SK-N-SH (cell line): ENCODE measurements at regions of chr2 and their contacts with region 1.

Region 1: DNA sequence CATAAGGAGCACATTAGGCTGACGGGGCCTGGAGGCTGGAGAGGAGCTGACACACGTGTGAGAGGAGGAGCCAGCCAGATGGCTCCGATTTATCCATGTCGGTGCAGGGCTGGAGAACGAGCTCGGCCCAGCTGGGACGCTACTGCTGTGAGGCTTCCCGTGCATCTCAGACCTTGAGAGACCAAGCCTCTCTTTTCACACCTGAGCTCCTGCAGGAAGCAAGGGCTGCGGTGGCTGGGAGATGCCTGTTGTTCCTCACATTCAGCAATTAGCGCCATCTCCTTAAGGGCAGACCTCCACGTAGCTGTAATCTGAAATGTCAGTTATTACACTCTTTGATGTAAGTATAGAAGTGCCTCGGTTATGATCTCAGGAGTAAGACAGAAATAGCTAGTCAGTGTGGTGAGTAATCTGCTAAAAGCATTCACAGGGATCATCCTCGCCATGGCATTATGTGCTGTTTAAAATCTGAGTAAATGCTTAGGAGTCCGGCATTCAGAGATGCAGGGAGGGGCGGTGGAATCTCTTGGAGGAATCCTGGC is 107.9 kb downstream of the PRKCE start:
- DNase-seq: peak; percentile 79
- H3K4me3 ChIP-seq: peak overlapping the region; percentile 29; a peak in 3 of 4 replicates
- H3K27ac ChIP-seq: peak overlapping the region in 1 of 2 experiments; percentile 69
- H3K4me1 ChIP-seq: peaks cover 17 to 42% of the 10 kb centered on the region in 2 experiments; a peak in 2 of 4 replicates
- H3K27me3 ChIP-seq: no peaks in the 10 kb centered on the region
- CTCF ChIP-seq: no peak
- EP300 ChIP-seq: peak; percentile 0 to 53; a peak in 1 of 4 replicates
- RAD21 ChIP-seq: no peak

Region 2: DNA sequence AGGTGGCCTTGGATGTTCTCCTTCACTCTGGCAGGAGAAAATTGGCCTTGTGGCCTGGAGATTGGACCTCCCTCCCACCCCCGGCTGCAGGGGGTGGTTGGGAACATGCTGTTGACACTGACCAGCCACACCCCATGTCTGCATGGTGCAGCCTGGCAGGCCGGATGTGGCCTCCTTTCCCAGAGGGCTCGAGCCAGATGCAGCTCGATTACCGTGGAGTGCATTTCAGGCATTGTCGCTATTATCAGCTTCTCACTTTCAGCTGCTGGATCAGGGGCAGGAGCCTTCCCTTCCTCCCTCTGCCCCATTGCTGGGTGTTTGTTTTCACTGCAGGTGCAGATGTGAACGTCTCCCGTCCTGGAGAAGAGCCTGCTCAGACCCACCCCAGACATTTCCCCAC is 539.2 kb before region 1 on chr2:
- CTCF ChIA-PET with region 1: no interaction called
- POLR2A ChIA-PET with region 1: no interaction called
- DNase-seq: peak; percentile 81
- H3K4me3 ChIP-seq: no peak overlapping the region; a peak in 1 of 4 replicates
- H3K27ac ChIP-seq: peak overlapping the region in 1 of 2 experiments; percentile 43; a peak in 2 of 4 replicates
- H3K4me1 ChIP-seq: peaks cover 0 to 14% of the 10 kb centered on the region in 2 experiments; a peak in 2 of 4 replicates
- H3K27me3 ChIP-seq: no peaks in the 10 kb centered on the region
- CTCF ChIP-seq: no peak
- EP300 ChIP-seq: peak in 1 of 2 experiments; percentile 72; a peak in 2 of 4 replicates
- RAD21 ChIP-seq: peak; percentile 10; the same call in 1 of the 2 replicates

Region 3: GRCh38 chr2:45771261-45771660 is 11.9 kb after region 1 on chr2:
- CTCF ChIA-PET with region 1: interaction called, 59 read pairs
- POLR2A ChIA-PET with region 1: interaction called, 3 read pairs
- DNase-seq: peak; percentile 62
- H3K4me3 ChIP-seq: no peak overlapping the region
- H3K27ac ChIP-seq: no peak overlapping the region; a peak in 1 of 4 replicates
- H3K4me1 ChIP-seq: peaks cover 0 to 53% of the 10 kb centered on the region in 2 experiments; a peak in 2 of 4 replicates
- H3K27me3 ChIP-seq: no peaks in the 10 kb centered on the region
- CTCF ChIP-seq: no peak
- EP300 ChIP-seq: no peak
- RAD21 ChIP-seq: peak; percentile 48